ENCODE measurements at regions of chr14 and their contacts with region 1.

Region 1: DNA sequence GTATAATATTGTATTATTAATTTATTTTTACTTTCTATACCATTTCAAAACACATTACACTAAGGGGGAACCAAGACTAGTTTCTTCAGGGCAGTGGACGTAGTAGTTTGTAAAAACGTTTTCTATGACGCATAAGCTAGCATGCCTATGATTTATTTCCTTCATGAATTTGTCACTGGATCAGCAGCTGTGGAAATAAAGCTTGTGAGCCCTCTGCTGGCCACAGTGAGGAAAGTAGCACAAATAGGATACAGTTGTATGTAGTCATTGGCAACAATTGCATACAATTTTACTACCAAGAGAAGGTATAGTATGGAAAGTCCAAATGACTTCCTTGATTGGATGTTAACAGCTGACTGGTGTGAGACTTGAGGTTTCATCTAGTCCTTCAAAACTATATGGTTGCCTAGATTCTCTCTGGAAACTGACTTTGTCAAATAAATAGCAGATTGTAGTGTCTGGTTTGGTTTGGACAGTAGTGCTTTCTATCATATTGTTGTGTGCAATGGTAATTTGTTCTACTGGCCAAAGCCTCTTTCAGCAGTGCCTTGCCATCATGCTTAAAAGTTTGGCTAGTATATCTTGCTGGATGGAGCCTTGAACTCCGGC is 24.3 kb upstream of the PLEKHD1 start:
- DNase-seq: peak; percentile 42 to 69 (median 48)
- ATAC-seq: peak; percentile 85
- H3K4me3 ChIP-seq: no peak overlapping the region
- H3K27ac ChIP-seq: no peak overlapping the region
- H3K4me1 ChIP-seq: no peaks in the 10 kb centered on the region
- H3K27me3 ChIP-seq: no peaks in the 10 kb centered on the region
- CTCF ChIP-seq: peak; percentile 64 to 77 (median 73)
- EP300 ChIP-seq: no peak
- POLR2A ChIP-seq: no peak
- RAD21 ChIP-seq: peak; percentile 44 to 75; a peak in 3 of 4 replicates

Region 2: DNA sequence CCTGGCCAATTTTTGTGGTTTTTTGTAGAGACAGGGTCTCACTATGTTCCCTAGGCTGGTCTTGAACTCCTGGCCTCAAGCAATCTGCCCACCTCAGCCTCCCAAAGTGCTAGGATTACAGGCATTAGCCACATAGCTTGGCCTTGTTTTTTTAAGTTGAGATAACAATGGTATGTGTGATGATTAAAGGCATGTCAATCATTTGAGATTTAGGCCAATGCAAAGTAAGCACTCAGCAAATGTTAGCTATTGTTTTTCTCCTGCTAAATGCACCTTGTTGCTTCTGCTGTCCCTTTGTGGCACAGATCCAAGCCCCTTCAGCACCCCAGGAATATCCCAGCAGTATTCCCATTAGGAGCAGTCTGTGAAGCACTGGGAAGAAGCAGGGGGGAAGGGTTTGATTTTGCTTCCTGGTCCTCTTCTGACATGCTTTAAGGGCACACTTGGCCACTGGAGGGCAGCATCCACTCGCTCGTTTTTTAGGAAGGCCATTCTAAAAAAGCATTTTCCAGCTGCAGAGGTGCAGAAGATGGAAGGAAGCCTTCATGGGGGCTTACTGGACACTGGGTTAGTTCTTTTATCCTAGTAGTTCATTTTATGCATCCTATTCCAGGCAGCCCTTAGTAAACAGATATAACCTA is 597.1 kb before region 1 on chr14:
- CTCF ChIA-PET with region 1: no interaction called
- POLR2A ChIA-PET with region 1: no interaction called
- in situ Hi-C with region 1: loop called (anchors 25 kb)
- intact Hi-C with region 1: loop called (anchors 10 kb)
- DNase-seq: peak; percentile 54 to 77 (median 60)
- ATAC-seq: peak; percentile 90
- H3K4me3 ChIP-seq: no peak overlapping the region
- H3K27ac ChIP-seq: no peak overlapping the region
- H3K4me1 ChIP-seq: no peaks in the 10 kb centered on the region; a peak in 2 of 5 replicates
- H3K27me3 ChIP-seq: no peaks in the 10 kb centered on the region
- CTCF ChIP-seq: peak; percentile 66 to 78 (median 75)
- EP300 ChIP-seq: no peak
- POLR2A ChIP-seq: no peak
- RAD21 ChIP-seq: peak; percentile 53 to 73

Region 3: DNA sequence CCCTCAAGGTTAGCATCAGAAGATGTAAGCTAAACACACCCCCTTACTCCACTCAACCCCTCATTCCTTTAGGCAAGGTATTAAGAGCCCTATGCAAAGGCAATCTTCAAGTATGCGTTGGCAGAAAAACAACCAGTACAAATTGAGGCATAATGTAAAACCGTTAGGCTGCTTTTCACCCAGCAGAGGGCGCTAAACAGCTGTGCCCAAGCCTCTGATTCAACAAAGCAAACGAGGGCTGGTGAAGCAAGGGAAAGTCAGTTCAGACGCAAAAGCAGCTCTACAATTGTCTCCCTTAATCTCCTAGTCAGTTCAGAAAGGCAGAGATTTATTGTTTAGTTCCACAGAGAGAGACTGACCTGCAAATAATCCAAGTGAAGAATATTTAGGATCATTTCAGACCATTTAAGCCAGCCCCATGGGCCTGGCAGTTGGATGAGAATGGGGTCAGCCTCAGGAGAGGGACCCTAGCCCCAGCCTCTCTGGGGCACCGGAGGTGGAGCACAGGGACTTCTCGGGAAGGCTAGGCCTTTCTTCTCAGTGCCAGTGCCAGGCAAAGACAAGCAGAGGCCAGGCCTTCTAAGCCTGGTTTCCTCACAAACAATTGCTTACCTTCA is 330.8 kb before region 1 on chr14:
- CTCF ChIA-PET with region 1: interaction called, 3 read pairs
- POLR2A ChIA-PET with region 1: no interaction called
- in situ Hi-C with region 1: no loop called
- intact Hi-C with region 1: loop called (anchors 5 kb)
- DNase-seq: peak; percentile 51 to 79 (median 57)
- ATAC-seq: peak; percentile 82
- H3K4me3 ChIP-seq: no peak overlapping the region
- H3K27ac ChIP-seq: no peak overlapping the region
- H3K4me1 ChIP-seq: peaks cover 0 to 17% of the 10 kb centered on the region in 2 experiments; a peak in 2 of 5 replicates
- H3K27me3 ChIP-seq: no peaks in the 10 kb centered on the region
- CTCF ChIP-seq: peak; percentile 78 to 85 (median 79)
- EP300 ChIP-seq: no peak
- POLR2A ChIP-seq: no peak
- RAD21 ChIP-seq: peak; percentile 72 to 76

Region 4: GRCh38 chr14:69242311-69243224 is 217.6 kb before region 1 on chr14:
- CTCF ChIA-PET with region 1: interaction called, 7 read pairs
- POLR2A ChIA-PET with region 1: no interaction called
- in situ Hi-C with region 1: no loop called
- intact Hi-C with region 1: loop called (anchors 2 kb)
- DNase-seq: peak; percentile 51 to 59 (median 56)
- ATAC-seq: peak; percentile 82
- H3K4me3 ChIP-seq: no peak overlapping the region
- H3K27ac ChIP-seq: no peak overlapping the region
- H3K4me1 ChIP-seq: peaks cover 1 to 3% of the 10 kb centered on the region in 2 experiments; a peak in 1 of 5 replicates
- H3K27me3 ChIP-seq: peaks cover 0 to 2% of the 10 kb centered on the region in 2 experiments; a peak in 1 of 5 replicates
- CTCF ChIP-seq: peak; percentile 48 to 69 (median 68); a peak in 5 of 6 replicates
- EP300 ChIP-seq: no peak
- POLR2A ChIP-seq: no peak
- RAD21 ChIP-seq: peak; percentile 41 to 63; a peak in 3 of 4 replicates

Region 5: GRCh38 chr14:69260861-69261564 is 199.2 kb before region 1 on chr14:
- CTCF ChIA-PET with region 1: no interaction called
- POLR2A ChIA-PET with region 1: no interaction called
- in situ Hi-C with region 1: loop called (anchors 25 kb)
- intact Hi-C with region 1: no loop called
- DNase-seq: peak; percentile 19 to 73 (median 70)
- ATAC-seq: peak; percentile 90
- H3K4me3 ChIP-seq: peak overlapping the region; percentile 11; the same call in 1 of the 2 replicates
- H3K27ac ChIP-seq: no peak overlapping the region
- H3K4me1 ChIP-seq: peaks cover 0 to 23% of the 10 kb centered on the region in 2 experiments; a peak in 2 of 5 replicates
- H3K27me3 ChIP-seq: peaks cover 14 to 74% of the 10 kb centered on the region in 2 experiments
- CTCF ChIP-seq: peak; percentile 35 to 58 (median 49); a peak in 5 of 6 replicates
- EP300 ChIP-seq: no peak
- POLR2A ChIP-seq: no peak
- RAD21 ChIP-seq: peak in 1 of 2 experiments; percentile 32; a peak in 1 of 4 replicates

Region 6: DNA sequence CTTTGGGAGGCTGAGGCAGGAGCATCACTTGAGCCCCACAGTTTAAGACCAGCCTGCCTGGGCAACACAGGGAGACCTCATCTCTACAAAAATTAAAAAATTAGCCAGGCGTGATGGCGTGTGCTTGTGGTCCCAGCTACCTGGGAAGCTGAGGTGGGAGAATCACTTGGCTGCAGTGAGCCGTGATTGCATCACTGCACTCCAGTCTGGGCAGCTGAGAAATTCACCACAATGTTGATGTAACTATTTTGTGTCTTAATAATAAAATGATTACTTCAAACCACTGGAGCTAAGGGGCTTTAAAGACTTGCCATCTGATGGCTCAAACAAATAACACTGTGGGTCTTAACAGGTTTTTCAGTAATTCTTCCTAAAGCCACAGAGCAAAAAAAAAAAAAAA is 72.9 kb before region 1 on chr14:
- CTCF ChIA-PET with region 1: no interaction called
- POLR2A ChIA-PET with region 1: no interaction called
- in situ Hi-C with region 1: no loop called
- intact Hi-C with region 1: no loop called
- DNase-seq: no peak
- ATAC-seq: no peak
- H3K4me3 ChIP-seq: no peak overlapping the region
- H3K27ac ChIP-seq: no peak overlapping the region
- H3K4me1 ChIP-seq: no peaks in the 10 kb centered on the region
- H3K27me3 ChIP-seq: no peaks in the 10 kb centered on the region
- CTCF ChIP-seq: no peak
- EP300 ChIP-seq: no peak
- POLR2A ChIP-seq: no peak
- RAD21 ChIP-seq: no peak

Region 7: DNA sequence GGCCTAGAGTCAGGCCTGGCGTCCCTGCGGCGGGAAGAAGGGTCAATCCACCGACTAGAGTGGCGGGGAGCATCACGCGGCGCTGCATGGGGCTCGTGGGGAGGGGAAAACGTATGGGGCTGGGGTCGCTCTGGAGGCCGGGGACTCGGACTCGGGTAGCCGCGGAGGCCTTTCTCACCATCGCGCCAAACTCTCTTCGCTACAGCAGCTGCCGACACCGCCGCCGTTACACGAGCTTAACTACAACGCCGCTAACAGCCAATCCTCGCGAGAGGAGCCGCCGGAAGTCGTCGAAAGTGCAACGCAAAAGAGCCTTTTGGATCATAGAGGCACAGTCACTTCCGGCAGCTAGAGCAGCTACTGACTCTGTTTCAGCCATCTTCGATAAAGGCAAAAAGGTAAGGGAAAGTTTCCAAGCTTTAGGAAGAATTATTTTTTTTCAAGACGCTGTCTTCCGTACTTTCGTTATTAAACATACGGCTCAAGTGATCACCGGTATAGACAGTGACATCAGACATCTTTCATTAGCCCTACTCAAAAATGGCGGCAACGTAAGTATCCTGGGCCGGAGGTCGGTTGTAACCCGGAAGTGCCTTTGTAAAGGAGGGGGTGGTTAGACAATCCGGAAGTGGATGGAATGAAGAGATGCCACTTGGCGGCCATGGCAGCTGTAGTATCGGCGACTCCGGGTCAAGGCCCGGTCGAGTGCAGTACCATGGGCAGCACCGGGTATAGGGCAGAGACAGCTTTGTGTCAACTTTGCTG is 62.0 kb before region 1 on chr14 and contains the starts of genes ERH and SLC39A9:
- CTCF ChIA-PET with region 1: no interaction called
- POLR2A ChIA-PET with region 1: interaction called, 5 read pairs
- in situ Hi-C with region 1: no loop called
- intact Hi-C with region 1: loop called (anchors 5 kb)
- DNase-seq: peak; percentile 75 to 94 (median 84)
- ATAC-seq: peak; percentile 87
- H3K4me3 ChIP-seq: peak within 1 kb of the TSS; percentile 81
- H3K27ac ChIP-seq: peak within 1 kb of the TSS; percentile 95
- H3K4me1 ChIP-seq: peaks cover 0 to 10% of the 10 kb centered on the region in 2 experiments; a peak in 4 of 5 replicates
- H3K27me3 ChIP-seq: no peaks in the 10 kb centered on the region
- CTCF ChIP-seq: 0 out of 6 replicates have a peak, but pooled peaks of 1 of the 3 experiments have one; percentile 12
- EP300 ChIP-seq: peak; percentile 46
- POLR2A ChIP-seq: peak; percentile 85
- RAD21 ChIP-seq: no peak
- polyA plus RNA-seq, gene ERH: 292 to 474 TPM
- polyA plus RNA-seq, gene SLC39A9: 18.4 to 24.0 TPM

Region 8: DNA sequence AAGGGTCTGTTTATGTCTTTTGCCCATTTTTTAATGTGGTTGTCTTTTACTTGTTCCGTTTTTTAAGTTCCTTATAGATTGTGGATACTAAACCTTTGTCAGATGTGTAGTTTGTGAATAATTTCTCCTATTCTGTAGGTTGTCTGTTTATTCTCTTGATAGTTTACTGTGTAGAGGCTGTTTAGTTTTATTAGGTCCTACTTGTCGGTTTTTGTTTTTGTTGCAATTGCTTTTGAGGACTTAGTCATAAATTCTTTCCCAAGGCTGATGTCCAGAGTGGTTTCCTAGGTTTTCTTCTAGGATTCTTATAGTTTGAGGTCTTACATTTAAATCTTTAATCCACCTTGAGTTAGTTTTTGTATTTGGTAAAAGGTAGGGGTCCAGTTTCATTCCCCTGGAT is 27.8 kb before region 1 on chr14:
- CTCF ChIA-PET with region 1: no interaction called
- POLR2A ChIA-PET with region 1: no interaction called
- in situ Hi-C with region 1: no loop called
- intact Hi-C with region 1: no loop called
- DNase-seq: no peak
- ATAC-seq: no peak
- H3K4me3 ChIP-seq: no peak overlapping the region
- H3K27ac ChIP-seq: no peak overlapping the region
- H3K4me1 ChIP-seq: no peaks in the 10 kb centered on the region
- H3K27me3 ChIP-seq: no peaks in the 10 kb centered on the region
- CTCF ChIP-seq: no peak
- EP300 ChIP-seq: no peak
- POLR2A ChIP-seq: no peak
- RAD21 ChIP-seq: no peak

Measured in K562 (cell line).